ENCODE measurements at regions of chr7 and their contacts with region 1.

Region 1: GRCh38 chr7:85890244-85890811 is 703.5 kb upstream of the SEMA3D start:
- DNase-seq: no peak
- H3K4me3 Mint-ChIP-seq: no peak overlapping the region
- H3K27ac Mint-ChIP-seq: no peak overlapping the region
- H3K4me1 Mint-ChIP-seq: no peaks in the 10 kb centered on the region
- H3K27me3 Mint-ChIP-seq: no peaks in the 10 kb centered on the region

Region 2: DNA sequence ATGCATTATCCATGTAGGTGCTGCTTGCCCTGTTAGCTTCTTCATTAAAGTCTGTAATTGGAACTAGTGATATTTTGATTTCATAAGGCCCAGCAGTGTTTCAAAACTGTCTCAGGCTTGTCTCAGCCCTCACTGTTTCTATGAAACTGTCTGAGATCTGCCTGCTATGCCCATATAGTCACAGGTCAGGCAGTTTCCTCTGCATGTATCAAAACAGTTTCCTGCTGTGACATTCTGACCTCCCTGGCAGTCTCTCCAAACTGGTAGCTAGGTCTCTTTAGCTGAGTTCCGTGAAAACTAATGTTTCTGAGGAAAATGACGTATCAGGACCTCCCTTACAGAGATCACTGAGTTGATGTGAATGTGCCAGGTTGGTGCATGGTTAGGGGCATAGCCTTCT is 684.6 kb before region 1 on chr7:
- intact Hi-C with region 1: no loop called
- DNase-seq: no peak
- H3K4me3 Mint-ChIP-seq: no peak overlapping the region
- H3K27ac Mint-ChIP-seq: no peak overlapping the region
- H3K4me1 Mint-ChIP-seq: no peaks in the 10 kb centered on the region
- H3K27me3 Mint-ChIP-seq: no peaks in the 10 kb centered on the region

Region 3: DNA sequence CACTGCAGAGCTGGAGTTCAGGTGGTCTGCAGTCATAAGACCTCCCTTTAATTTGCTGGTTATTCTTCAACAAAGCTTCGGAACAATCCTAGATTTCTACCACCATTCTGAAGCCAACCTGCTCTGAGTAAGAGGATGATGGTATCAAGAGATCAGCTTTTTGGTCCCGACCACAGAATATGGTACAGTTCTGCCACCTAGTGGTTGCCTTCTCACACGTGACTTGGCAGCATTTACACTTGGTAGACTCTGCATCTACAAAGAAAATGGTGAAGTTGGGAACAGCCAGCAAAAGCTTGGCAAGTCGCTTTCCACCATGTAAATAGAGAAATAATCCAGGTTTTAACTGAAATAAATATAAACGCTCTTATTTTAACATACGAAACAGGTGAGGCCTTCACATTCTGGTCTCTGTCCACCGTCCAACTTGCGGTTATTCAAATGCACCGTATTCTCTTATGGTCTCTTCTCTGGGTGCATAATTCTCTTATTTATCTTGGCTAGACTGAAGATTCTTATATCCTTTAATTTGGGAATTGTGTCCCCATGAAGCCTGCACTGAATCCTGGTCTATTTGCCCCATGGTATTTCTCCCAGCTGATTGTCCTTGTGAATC is 579.5 kb after region 1 on chr7:
- intact Hi-C with region 1: loop called (anchors 1 kb)
- DNase-seq: peak; percentile 23
- H3K4me3 Mint-ChIP-seq: no peak overlapping the region
- H3K27ac Mint-ChIP-seq: no peak overlapping the region
- H3K4me1 Mint-ChIP-seq: no peaks in the 10 kb centered on the region
- H3K27me3 Mint-ChIP-seq: no peaks in the 10 kb centered on the region

Region 4: GRCh38 chr7:86904949-86905834 is 1014.9 kb after region 1 on chr7:
- intact Hi-C with region 1: loop called (anchors 5 kb)
- DNase-seq: no peak
- H3K4me3 Mint-ChIP-seq: no peak overlapping the region
- H3K27ac Mint-ChIP-seq: no peak overlapping the region
- H3K4me1 Mint-ChIP-seq: no peaks in the 10 kb centered on the region
- H3K27me3 Mint-ChIP-seq: no peaks in the 10 kb centered on the region

Measured in activated T-helper 1 cell treated with anti-CD3 and anti-CD28 coated beads, Interleukin-12 subunit alpha, Interleukin-12 subunit beta, Interleukin-2, Interleukin-4 antibody, amounts not matched to agents 30 ng/mL and 10 ng/mL and 1 ng/mL, durations not matched to agents 14 hours and 24 hours and 36 hours (primary cell).